ENCODE measurements at regions of chr7 and their contacts with region 1.

Region 1: GRCh38 chr7:105890290-105890997 is 14.0 kb upstream of the ATXN7L1 start:
- DNase-seq: peak; percentile 29
- H3K4me3 Mint-ChIP-seq: no peak overlapping the region
- H3K27ac Mint-ChIP-seq: no peak overlapping the region
- H3K4me1 Mint-ChIP-seq: peaks cover 12% of the 10 kb centered on the region
- H3K27me3 Mint-ChIP-seq: no peaks in the 10 kb centered on the region

Region 2: DNA sequence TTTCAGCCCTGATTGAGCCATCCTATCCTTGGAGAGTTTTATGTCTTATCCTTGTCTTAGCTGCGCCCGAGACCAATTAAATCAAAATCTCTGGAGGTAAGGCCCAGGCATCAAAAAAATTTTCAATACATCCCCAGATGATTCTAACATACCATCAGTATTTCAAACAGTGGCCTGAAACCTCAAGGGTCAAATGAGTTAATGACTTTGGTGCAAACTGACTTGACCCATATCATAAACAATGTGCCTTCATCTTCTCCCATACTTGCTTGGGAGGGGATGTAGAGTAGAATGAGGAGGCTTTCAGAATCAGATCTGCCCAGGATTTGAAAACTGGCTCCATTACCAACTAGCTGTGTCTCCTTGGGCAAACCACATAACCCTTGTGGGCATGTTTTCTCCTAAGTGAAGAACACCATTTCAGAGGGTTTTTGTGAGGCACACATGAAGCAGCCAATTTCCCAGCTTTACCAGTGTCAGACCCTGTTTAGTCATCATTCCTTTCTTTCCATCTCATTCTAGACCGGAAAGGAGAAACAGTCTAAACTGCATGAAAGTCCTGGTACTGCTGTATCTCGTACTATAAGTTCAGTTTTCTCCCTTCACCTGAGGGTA is 21.6 kb after region 1 on chr7:
- CTCF ChIA-PET with region 1: no interaction called
- POLR2A ChIA-PET with region 1: no interaction called
- intact Hi-C with region 1: no loop called
- DNase-seq: no peak
- H3K4me3 Mint-ChIP-seq: no peak overlapping the region
- H3K27ac Mint-ChIP-seq: no peak overlapping the region
- H3K4me1 Mint-ChIP-seq: no peaks in the 10 kb centered on the region
- H3K27me3 Mint-ChIP-seq: no peaks in the 10 kb centered on the region

Region 3: GRCh38 chr7:105924945-105925344 is 34.5 kb after region 1 on chr7:
- CTCF ChIA-PET with region 1: interaction called, 4 read pairs
- POLR2A ChIA-PET with region 1: no interaction called
- intact Hi-C with region 1: loop called (anchors 2 kb)
- DNase-seq: peak; percentile 50
- H3K4me3 Mint-ChIP-seq: no peak overlapping the region
- H3K27ac Mint-ChIP-seq: peak overlapping the region; percentile 53
- H3K4me1 Mint-ChIP-seq: peaks cover 30% of the 10 kb centered on the region
- H3K27me3 Mint-ChIP-seq: peaks cover 2% of the 10 kb centered on the region

Measured in activated CD4-positive, alpha-beta memory T cell treated with anti-CD3 and anti-CD28 coated beads for 36 hours (primary cell).